ENCODE measurements at regions of chr1 and their contacts with region 1.

Region 1: GRCh38 chr1:200861937-200862647 is 10.7 kb upstream of the GPR25 start:
- DNase-seq: peak in 1 of 2 donors; percentile 60
- ATAC-seq: peak; percentile 67 to 76 (median 74)
- H3K4me3 ChIP-seq: no peak overlapping the region
- H3K4me3 Mint-ChIP-seq: peak overlapping the region; percentile 52
- H3K27ac ChIP-seq: peak overlapping the region; percentile 79
- H3K27ac Mint-ChIP-seq: peak overlapping the region; percentile 72 to 87
- H3K4me1 ChIP-seq: peaks cover 22% of the 10 kb centered on the region
- H3K4me1 Mint-ChIP-seq: peaks cover 27 to 39% of the 10 kb centered on the region in 2 donors
- H3K27me3 ChIP-seq: no peaks in the 10 kb centered on the region
- H3K27me3 Mint-ChIP-seq: no peaks in the 10 kb centered on the region
- CTCF ChIP-seq: no peak

Region 2: DNA sequence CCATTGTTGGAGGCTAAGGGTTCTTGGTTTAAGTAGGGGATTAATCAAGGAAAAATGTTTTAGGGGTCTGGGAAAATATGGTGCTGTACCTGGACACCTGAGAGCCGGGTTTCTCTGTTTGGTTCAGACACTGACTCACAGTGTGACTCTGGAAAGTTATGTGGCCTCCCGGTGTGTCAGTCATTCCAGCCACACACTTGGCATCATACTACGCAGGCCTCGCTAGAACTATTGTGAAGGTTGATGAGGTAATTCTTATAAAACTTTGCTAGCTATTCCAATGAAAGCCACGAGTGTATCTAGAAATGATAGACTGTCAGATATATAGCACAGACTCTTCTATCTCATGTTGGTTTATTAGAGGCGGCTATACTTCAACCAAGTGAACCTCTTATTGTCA is 128.2 kb before region 1 on chr1:
- intact Hi-C with region 1: no loop called
- DNase-seq: no peak
- ATAC-seq: no peak
- H3K4me3 ChIP-seq: no peak overlapping the region
- H3K4me3 Mint-ChIP-seq: no peak overlapping the region
- H3K27ac ChIP-seq: no peak overlapping the region
- H3K27ac Mint-ChIP-seq: no peak overlapping the region
- H3K4me1 ChIP-seq: peaks cover 5% of the 10 kb centered on the region
- H3K4me1 Mint-ChIP-seq: peaks cover 12 to 13% of the 10 kb centered on the region in 2 donors
- H3K27me3 ChIP-seq: peaks cover 4% of the 10 kb centered on the region
- H3K27me3 Mint-ChIP-seq: peaks cover 21% of the 10 kb centered on the region in 2 donors
- CTCF ChIP-seq: no peak

Region 3: DNA sequence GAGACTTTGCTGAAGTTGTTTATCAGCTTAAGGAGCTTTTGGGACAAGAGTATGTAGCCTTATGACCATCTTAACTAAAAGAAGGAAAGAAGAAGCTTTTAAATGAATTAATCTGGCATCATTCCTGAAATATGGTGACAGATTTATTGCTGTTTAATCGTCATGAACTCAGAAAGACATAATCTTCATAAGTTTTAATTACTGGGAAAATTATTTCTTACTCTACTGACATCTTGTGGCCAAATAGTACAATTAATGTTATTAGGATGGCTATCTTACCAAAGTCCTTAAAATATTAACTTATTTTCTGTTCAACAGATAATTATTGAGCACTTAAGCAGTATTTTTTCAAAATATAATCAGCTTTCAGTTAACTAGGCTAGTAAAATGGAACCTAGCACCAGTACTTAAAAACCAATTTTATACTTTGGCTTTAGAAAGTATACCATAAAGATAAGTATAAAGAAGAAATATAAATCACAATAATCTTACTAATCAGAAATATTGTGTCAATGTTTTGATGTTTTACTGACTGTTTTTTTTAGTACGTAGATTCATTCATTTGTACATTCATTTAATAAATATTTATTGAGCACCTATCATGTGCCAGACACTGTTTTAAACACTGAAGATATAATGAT is 24.0 kb before region 1 on chr1:
- intact Hi-C with region 1: no loop called
- DNase-seq: peak in 1 of 2 donors; percentile 6
- ATAC-seq: no peak
- H3K4me3 ChIP-seq: no peak overlapping the region
- H3K4me3 Mint-ChIP-seq: no peak overlapping the region
- H3K27ac ChIP-seq: no peak overlapping the region
- H3K27ac Mint-ChIP-seq: no peak overlapping the region
- H3K4me1 ChIP-seq: no peaks in the 10 kb centered on the region
- H3K4me1 Mint-ChIP-seq: no peaks in the 10 kb centered on the region
- H3K27me3 ChIP-seq: no peaks in the 10 kb centered on the region
- H3K27me3 Mint-ChIP-seq: no peaks in the 10 kb centered on the region
- CTCF ChIP-seq: peak; percentile 22

Region 4: GRCh38 chr1:200907611-200908097 is 45.6 kb after region 1 on chr1:
- intact Hi-C with region 1: loop called (anchors 5 kb)
- DNase-seq: no peak
- ATAC-seq: no peak
- H3K4me3 ChIP-seq: no peak overlapping the region
- H3K4me3 Mint-ChIP-seq: no peak overlapping the region
- H3K27ac ChIP-seq: no peak overlapping the region
- H3K27ac Mint-ChIP-seq: peak overlapping the region in 1 of 2 donors; percentile 32
- H3K4me1 ChIP-seq: peaks cover 25% of the 10 kb centered on the region
- H3K4me1 Mint-ChIP-seq: peaks cover 0 to 10% of the 10 kb centered on the region in 2 donors
- H3K27me3 ChIP-seq: peaks cover under 1% of the 10 kb centered on the region
- H3K27me3 Mint-ChIP-seq: peaks cover 10% of the 10 kb centered on the region in 2 donors
- CTCF ChIP-seq: no peak

Measured in natural killer cell (primary cell).